ENCODE measurements at regions of chr1 and their contacts with region 1.

Region 1: GRCh38 chr1:16187748-16188401 is 24.6 kb downstream of the ARHGEF19 start:
- DNase-seq: peak; percentile 23 to 84
- H3K4me3 ChIP-seq: no peak overlapping the region
- H3K4me1 ChIP-seq: peaks cover 2% of the 10 kb centered on the region; the same call in 1 of the 2 replicates
- H3K27me3 ChIP-seq: 0 out of 2 replicates have a peak, but pooled peaks cover 3% of the 10 kb centered on the region

Region 2: GRCh38 chr1:15949453-15950245 is 238.2 kb before region 1 on chr1:
- in situ Hi-C with region 1: no loop called
- DNase-seq: no peak
- H3K4me3 ChIP-seq: no peak overlapping the region
- H3K4me1 ChIP-seq: peaks cover 5% of the 10 kb centered on the region
- H3K27me3 ChIP-seq: no peaks in the 10 kb centered on the region

Region 3: DNA sequence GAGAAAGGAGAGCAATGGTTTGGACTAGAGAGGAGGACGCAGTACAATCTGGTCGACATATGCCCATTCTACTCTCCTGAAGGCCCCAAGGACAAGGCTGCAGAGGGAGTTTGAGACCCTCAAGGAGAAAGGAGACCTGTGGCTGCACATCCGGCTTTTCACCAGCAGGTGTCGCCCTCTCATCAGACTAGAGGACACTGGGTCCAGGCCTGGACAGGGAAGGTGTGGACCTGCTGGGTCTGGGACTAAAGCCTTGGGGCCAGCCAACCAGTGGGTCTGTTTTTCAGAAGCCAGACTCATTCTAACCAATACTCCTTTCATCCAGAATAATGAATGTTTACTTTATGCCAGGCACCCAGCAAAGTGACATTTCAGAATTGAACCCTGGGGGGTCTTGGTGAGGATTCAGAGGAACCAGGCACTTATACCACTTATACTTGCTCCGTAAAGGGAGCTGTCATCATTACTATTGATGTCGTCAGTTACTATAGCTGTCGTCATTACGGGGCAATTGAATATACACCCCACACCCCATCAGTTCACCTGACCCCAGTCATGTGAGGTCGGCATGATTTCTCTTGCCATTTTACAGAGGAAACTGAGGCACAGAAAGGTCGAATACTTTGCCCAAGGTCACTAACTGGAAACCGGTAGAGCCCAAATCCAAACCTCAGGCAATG is 178.7 kb before region 1 on chr1:
- in situ Hi-C with region 1: loop called (anchors 10 kb)
- DNase-seq: peak; percentile 47 to 92
- H3K4me3 ChIP-seq: no peak overlapping the region
- H3K4me1 ChIP-seq: peaks cover 11% of the 10 kb centered on the region
- H3K27me3 ChIP-seq: no peaks in the 10 kb centered on the region